WTC11 (cell line): ENCODE measurements at regions of chr7 and their contacts with region 1.

Region 1: GRCh38 chr7:142853739-142854371 is 1.0 kb upstream of the EPHB6 start:
- DNase-seq: peak; percentile 70
- ATAC-seq: peak; percentile 69
- H3K4me3 Mint-ChIP-seq: peak overlapping the region; percentile 94
- H3K27ac Mint-ChIP-seq: no peak overlapping the region
- H3K4me1 Mint-ChIP-seq: peaks cover 29% of the 10 kb centered on the region
- H3K27me3 Mint-ChIP-seq: peaks cover 17% of the 10 kb centered on the region
- CTCF ChIP-seq: no peak

Region 2: DNA sequence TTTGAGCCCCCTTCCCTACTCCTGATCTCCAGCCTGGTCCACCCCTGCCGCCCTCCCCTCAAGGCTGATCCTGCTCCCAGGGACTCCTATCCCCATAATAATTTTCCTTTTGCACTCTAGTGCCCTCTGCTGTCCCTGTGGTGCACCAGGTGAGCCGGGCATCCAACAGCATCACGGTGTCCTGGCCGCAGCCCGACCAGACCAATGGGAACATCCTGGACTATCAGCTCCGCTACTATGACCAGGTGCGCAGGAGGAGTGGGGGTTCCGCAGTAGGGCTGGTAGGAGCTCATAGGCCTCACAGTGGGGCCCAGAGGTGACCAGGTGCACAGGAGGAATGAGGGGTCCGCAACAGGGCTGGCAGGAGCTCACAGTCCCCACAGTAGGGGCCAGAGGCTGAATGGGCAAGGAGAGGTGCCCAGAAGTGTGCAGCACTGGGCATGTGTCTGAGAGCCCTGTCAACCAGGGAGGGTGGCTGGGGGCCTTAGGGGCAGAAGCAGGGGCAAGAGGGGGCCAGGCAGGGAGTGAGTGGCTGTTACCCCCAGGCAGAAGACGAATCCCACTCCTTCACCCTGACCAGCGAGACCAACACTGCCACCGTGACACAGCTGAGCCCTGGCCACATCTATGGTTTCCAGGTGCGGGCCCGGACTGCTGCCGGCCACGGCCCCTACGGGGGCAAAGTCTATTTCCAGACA is 12.7 kb after region 1 on chr7:
- CTCF ChIA-PET with region 1: interaction called, 47 read pairs
- POLR2A ChIA-PET with region 1: interaction called, 3 read pairs
- DNase-seq: peak; percentile 80
- ATAC-seq: peak; percentile 92
- H3K4me3 Mint-ChIP-seq: no peak overlapping the region
- H3K27ac Mint-ChIP-seq: no peak overlapping the region
- H3K4me1 Mint-ChIP-seq: peaks cover 39% of the 10 kb centered on the region
- H3K27me3 Mint-ChIP-seq: no peaks in the 10 kb centered on the region; the same call in none of the 2 replicates
- CTCF ChIP-seq: peak; percentile 39; the same call in 1 of the 2 replicates

Region 3: GRCh38 chr7:142873281-142873787 is 19.5 kb after region 1 on chr7:
- CTCF ChIA-PET with region 1: interaction called, 36 read pairs
- POLR2A ChIA-PET with region 1: no interaction called
- DNase-seq: peak; percentile 69
- ATAC-seq: peak; percentile 88
- H3K4me3 Mint-ChIP-seq: no peak overlapping the region
- H3K27ac Mint-ChIP-seq: no peak overlapping the region
- H3K4me1 Mint-ChIP-seq: no peaks in the 10 kb centered on the region
- H3K27me3 Mint-ChIP-seq: no peaks in the 10 kb centered on the region
- CTCF ChIP-seq: peak; percentile 90